Tibial artery (tissue), 4 donors: ENCODE measurements at regions of chr10 and their contacts with region 1.

Region 1: DNA sequence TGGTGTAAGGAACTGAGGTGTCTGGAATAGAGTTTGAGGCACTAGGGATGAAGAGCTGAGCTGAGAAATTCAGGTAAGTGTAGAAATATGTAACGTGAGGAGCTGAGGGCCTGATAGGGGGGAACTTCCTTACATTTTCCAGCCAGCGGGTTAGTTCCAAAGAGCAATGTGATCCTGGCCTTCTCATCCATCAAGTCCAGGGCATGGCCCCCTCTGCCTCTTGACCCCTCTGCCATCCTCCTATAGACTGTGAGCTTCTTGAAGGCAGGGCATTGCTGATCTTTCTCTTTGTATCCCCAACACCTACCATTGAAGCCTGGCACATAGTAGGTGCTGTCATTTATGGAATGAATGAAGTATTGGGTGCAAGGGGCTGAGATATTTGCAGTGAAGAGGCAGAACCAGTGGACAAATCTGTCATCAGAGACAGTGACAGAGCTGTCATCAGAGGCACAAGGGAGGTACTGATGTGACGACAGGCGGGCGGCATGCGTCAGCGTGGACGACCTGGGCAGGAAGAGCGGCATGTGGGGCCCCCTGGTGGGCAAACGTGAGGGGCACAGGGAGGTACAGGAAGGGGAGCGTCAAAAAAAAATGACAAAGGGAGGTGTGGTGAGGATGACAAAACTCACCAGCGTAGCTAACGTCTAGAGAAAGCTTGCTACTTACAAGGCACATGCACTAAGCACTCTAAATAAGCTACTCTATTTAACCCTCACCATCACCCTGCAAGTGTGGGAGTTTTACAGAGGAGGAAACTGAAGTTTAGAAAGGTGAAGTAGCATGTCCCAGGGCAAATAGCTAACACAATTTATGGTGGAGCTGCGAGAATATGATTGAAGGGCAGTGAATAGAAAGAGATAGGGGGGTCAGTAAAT is 5.2 kb upstream of the CAMK2G start:
- DNase-seq: peak; percentile 84 to 91
- H3K4me3 ChIP-seq: no peak overlapping the region
- H3K27ac ChIP-seq: peak overlapping the region; percentile 50 to 88
- H3K4me1 ChIP-seq: peaks cover 0 to 32% (median 18%) of the 10 kb centered on the region in 4 donors
- H3K27me3 ChIP-seq: no peaks in the 10 kb centered on the region
- CTCF ChIP-seq: peak; percentile 93 to 99

Region 2: GRCh38 chr10:73785221-73785720 is 94.3 kb before region 1 on chr10 and contains the start of gene ZSWIM8:
- intact Hi-C with region 1: loop called (anchors 10 kb)
- DNase-seq: peak; percentile 95 to 96
- H3K4me3 ChIP-seq: peak within 1 kb of the TSS; percentile 73 to 76
- H3K27ac ChIP-seq: peak within 1 kb of the TSS; percentile 87 to 96
- H3K4me1 ChIP-seq: peaks cover 8 to 58% (median 50%) of the 10 kb centered on the region in 4 donors
- H3K27me3 ChIP-seq: no peaks in the 10 kb centered on the region
- CTCF ChIP-seq: no peak

Region 3: DNA sequence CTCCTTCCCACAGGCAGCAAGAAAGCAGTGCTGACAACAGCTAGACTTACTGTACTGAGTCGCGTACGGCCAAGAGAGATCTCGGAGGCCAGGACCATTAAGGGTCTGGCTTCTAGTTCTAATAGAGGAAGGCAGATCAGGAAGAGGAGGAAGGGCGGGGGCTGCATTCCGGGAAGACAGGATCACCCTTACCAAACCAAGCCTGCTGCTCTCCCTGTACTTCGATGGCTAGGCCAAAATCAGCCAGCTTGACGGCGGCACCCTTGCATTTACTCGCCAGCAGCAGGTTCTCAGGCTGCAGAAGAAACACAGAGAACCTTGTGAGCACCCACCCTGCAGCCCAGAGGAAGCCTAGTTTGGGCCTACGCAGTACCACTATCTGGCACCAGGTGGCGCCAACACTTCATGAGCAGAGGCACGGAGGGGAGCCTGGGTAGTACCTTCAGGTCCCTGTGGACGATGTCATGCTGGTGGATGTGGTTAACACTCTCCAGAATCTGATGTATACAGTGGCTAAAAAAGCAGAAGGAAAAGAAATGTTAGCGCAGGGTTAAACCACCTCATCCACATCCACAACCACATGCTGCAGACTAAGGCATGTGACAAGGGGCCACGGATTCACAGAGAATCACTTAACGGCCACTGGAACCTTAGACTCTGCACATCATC is 30.6 kb before region 1 on chr10:
- intact Hi-C with region 1: loop called (anchors 1 kb)
- DNase-seq: peak; percentile 86 to 91
- H3K4me3 ChIP-seq: no peak overlapping the region
- H3K27ac ChIP-seq: peak overlapping the region; percentile 86 to 88
- H3K4me1 ChIP-seq: peaks cover 0 to 52% (median 45%) of the 10 kb centered on the region in 4 donors
- H3K27me3 ChIP-seq: no peaks in the 10 kb centered on the region
- CTCF ChIP-seq: peak; percentile 100

Region 4: GRCh38 chr10:74081192-74081803 is 201.8 kb after region 1 on chr10:
- intact Hi-C with region 1: loop called (anchors 10 kb)
- DNase-seq: peak in 1 of 2 donors; percentile 35
- H3K4me3 ChIP-seq: no peak overlapping the region
- H3K27ac ChIP-seq: peak overlapping the region in 1 of 2 donors; percentile 3
- H3K4me1 ChIP-seq: peaks cover 0 to 81% (median 26%) of the 10 kb centered on the region in 4 donors
- H3K27me3 ChIP-seq: no peaks in the 10 kb centered on the region
- CTCF ChIP-seq: peak; percentile 75 to 76